GM23248 (cell line): ENCODE measurements at regions of chr16 and their contacts with region 1.

Region 1: GRCh38 chr16:58494981-58495520 is 4.9 kb upstream of the NDRG4 start:
- DNase-seq: peak; percentile 88
- H3K4me3 ChIP-seq: no peak overlapping the region; the same call in 1 of the 2 replicates
- H3K27ac ChIP-seq: 0 out of 2 replicates have a peak overlapping the region, but pooled peaks have one; percentile 20
- H3K4me1 ChIP-seq: no peaks in the 10 kb centered on the region
- H3K27me3 ChIP-seq: no peaks in the 10 kb centered on the region; the same call in 1 of the 2 replicates

Region 2: GRCh38 chr16:58000706-58001676 is 494.1 kb before region 1 on chr16 and contains the start of gene USB1:
- in situ Hi-C with region 1: loop called (anchors 25 kb)
- DNase-seq: peak; percentile 92
- H3K4me3 ChIP-seq: peak within 1 kb of the TSS; percentile 98
- H3K27ac ChIP-seq: peak within 1 kb of the TSS; percentile 59
- H3K4me1 ChIP-seq: peaks cover 16% of the 10 kb centered on the region
- H3K27me3 ChIP-seq: no peaks in the 10 kb centered on the region
- total RNA-seq, gene USB1: 7.6 and 19.7 TPM in 2 replicates

Region 3: GRCh38 chr16:58264961-58265479 is 230.0 kb before region 1 on chr16:
- in situ Hi-C with region 1: no loop called
- DNase-seq: peak; percentile 89
- H3K4me3 ChIP-seq: no peak overlapping the region
- H3K27ac ChIP-seq: no peak overlapping the region; the same call in 1 of the 2 replicates
- H3K4me1 ChIP-seq: peaks cover 9% of the 10 kb centered on the region; the same call in 1 of the 2 replicates
- H3K27me3 ChIP-seq: no peaks in the 10 kb centered on the region

Region 4: DNA sequence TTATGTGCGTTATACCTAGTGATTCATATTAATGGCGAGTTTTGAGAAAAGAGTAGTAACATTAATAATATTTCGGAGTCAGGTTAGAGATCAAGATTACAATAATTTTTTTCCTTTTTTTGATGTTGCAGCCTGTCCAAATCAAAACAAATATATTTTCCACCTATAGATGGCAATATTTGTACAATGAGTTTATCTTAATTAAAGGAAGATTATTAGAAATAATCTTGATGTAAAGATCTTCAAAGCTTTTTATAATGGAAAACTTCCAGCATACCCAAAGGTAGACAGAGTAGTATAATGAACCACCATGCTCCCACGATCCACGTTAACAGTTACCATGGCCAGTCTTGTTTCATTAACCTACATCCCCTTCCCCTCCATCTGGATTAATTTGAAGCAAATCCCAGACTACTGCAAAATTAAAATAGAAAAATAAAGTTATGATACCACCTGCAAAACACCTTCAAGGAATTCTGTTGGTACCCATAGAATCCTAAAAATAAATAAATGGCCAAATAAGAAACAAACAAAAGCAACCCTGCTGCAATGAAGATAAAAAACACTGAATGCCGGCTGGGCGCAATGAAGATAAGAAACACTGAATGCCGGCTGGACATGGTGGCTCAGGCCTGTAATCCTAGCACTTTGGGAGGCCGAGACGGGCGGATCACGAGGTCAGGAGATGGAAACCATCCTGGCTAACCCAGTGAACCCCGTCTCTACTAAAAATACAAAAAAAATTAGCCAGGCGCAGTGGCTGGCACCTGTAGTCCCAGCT is 149.3 kb before region 1 on chr16:
- in situ Hi-C with region 1: loop called (anchors 5 kb)
- DNase-seq: peak; percentile 8
- H3K4me3 ChIP-seq: no peak overlapping the region
- H3K27ac ChIP-seq: no peak overlapping the region
- H3K4me1 ChIP-seq: no peaks in the 10 kb centered on the region
- H3K27me3 ChIP-seq: peaks cover 14% of the 10 kb centered on the region